HepG2 (cell line): ENCODE measurements at regions of chr7 and their contacts with region 1.

Region 1: GRCh38 chr7:100563809-100564400 is 9.8 kb downstream of the SAP25 start:
- DNase-seq: no peak
- ATAC-seq: peak; percentile 5; the same call in 1 of the 3 replicates
- H3K4me3 ChIP-seq: no peak overlapping the region
- H3K27ac ChIP-seq: peak overlapping the region; percentile 45
- H3K4me1 ChIP-seq: peaks cover 93% of the 10 kb centered on the region
- H3K27me3 ChIP-seq: no peaks in the 10 kb centered on the region
- CTCF ChIP-seq: peak; percentile 82
- EP300 ChIP-seq: no peak
- POLR2A ChIP-seq: no peak
- RAD21 ChIP-seq: peak; percentile 66

Region 2: DNA sequence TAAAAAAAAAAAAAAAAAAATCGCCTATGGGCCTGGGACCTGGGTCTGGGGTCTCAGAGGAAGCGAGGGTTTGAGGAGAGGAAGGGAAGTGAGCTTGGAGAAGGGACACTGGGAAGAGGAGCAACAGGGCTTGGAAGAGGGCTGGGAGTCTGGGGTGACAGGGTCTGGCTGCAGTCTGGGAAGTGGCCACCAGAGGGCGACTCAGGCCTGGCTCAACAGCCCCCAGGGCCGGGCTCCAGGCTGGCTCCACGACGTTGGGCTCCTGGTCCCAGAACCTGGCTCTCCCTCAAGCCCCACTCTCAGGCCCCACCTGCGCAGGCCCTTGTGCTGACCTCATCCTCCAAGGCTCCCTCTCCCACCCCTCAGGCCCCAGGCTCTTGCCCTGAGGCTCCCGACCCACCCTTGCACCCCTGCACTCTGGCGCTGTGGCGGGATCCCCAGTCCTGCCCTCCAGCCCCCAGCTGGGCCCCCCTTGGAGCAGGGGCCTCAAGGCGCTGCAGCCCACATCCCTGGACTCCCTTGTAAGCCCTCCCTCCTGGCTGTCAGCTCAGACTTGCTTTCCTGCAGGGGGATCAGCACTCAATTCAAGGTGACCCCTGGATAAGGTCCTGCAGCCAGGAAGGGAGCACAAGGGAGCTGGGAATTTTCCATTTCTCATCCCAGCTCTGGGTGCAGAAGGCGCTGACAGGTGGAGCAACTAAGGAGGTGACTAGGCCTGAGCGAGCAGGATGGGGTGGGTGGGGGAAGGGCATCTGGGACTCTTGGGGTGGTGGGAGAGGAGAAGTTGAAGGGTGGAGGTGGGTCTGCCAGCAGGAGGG is 94.5 kb before region 1 on chr7:
- CTCF ChIA-PET with region 1: interaction called, 16 read pairs
- POLR2A ChIA-PET with region 1: no interaction called
- in situ Hi-C with region 1: no loop called
- intact Hi-C with region 1: loop called (anchors 5 kb)
- DNase-seq: peak; percentile 51
- ATAC-seq: peak; percentile 87
- H3K4me3 ChIP-seq: 0 out of 6 replicates have a peak overlapping the region, but pooled peaks of 1 of the 3 experiments have one; percentile 28
- H3K27ac ChIP-seq: no peak overlapping the region
- H3K4me1 ChIP-seq: peaks cover 17% of the 10 kb centered on the region
- H3K27me3 ChIP-seq: no peaks in the 10 kb centered on the region
- CTCF ChIP-seq: peak; percentile 95
- EP300 ChIP-seq: no peak
- POLR2A ChIP-seq: no peak
- RAD21 ChIP-seq: peak; percentile 97

Region 3: DNA sequence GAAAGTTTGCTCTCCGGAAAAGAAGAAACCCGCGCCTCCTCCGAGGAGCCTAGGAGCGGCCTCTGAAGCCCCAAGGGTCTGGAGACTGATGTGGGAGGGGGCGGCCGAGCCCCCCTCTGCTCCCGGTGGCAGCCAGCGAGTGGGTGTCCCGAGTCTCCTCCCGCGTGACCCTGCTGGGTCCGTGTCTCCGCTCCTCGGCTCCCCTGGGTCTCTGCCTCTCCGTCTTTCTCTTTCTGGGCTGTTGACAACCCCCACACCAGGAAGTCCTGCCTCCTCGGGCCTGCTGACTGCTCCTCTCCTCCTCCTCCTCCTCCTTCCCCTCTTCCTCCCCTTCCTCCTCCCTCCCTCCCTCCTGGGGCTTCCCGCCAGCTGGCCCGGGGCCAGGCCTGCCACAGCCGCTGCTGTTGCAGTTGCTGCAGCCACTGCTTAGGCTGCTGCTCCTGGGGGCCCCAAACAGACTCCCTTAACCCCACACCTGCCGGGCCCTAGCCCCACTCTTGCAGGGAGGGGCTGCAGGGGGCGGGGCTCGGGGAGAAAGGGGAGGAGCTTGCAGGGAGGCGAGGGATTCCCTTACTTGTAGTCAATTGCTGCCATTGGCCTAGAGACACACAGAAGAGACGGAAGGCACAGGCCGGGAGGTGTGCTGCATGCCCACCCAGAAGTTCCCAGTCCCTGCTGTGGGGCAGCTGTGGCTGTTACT is 84.8 kb before region 1 on chr7 and contains the start of gene TSC22D4:
- CTCF ChIA-PET with region 1: interaction called, 10 read pairs
- POLR2A ChIA-PET with region 1: interaction called, 8 read pairs
- in situ Hi-C with region 1: no loop called
- intact Hi-C with region 1: no loop called
- DNase-seq: peak; percentile 73
- ATAC-seq: peak; percentile 60
- H3K4me3 ChIP-seq: peak within 1 kb of the TSS; percentile 72 to 96 (median 90)
- H3K27ac ChIP-seq: peak within 1 kb of the TSS; percentile 37
- H3K4me1 ChIP-seq: peaks cover 30% of the 10 kb centered on the region
- H3K27me3 ChIP-seq: peaks cover 0 to 13% of the 10 kb centered on the region in 2 experiments; a peak in 3 of 5 replicates
- CTCF ChIP-seq: no peak
- EP300 ChIP-seq: peak in 1 of 2 experiments; percentile 27; a peak in 1 of 4 replicates
- POLR2A ChIP-seq: peak; percentile 26 to 81; a peak in 3 of 4 replicates
- RAD21 ChIP-seq: no peak; the same call in 1 of the 2 replicates
- total RNA-seq, gene TSC22D4: 6.3 and 7.7 TPM in 2 replicates

Region 4: GRCh38 chr7:100489824-100490223 is 74.1 kb before region 1 on chr7:
- CTCF ChIA-PET with region 1: interaction called, 4 read pairs
- POLR2A ChIA-PET with region 1: interaction called, 3 read pairs
- in situ Hi-C with region 1: loop called (anchors 5 kb)
- intact Hi-C with region 1: loop called (anchors 2 kb)
- DNase-seq: peak; percentile 89
- ATAC-seq: peak; percentile 42
- H3K4me3 ChIP-seq: no peak overlapping the region
- H3K27ac ChIP-seq: no peak overlapping the region
- H3K4me1 ChIP-seq: peaks cover 60% of the 10 kb centered on the region
- H3K27me3 ChIP-seq: peaks cover 1 to 31% of the 10 kb centered on the region in 2 experiments
- CTCF ChIP-seq: no peak
- EP300 ChIP-seq: no peak
- POLR2A ChIP-seq: no peak
- RAD21 ChIP-seq: no peak

Region 5: DNA sequence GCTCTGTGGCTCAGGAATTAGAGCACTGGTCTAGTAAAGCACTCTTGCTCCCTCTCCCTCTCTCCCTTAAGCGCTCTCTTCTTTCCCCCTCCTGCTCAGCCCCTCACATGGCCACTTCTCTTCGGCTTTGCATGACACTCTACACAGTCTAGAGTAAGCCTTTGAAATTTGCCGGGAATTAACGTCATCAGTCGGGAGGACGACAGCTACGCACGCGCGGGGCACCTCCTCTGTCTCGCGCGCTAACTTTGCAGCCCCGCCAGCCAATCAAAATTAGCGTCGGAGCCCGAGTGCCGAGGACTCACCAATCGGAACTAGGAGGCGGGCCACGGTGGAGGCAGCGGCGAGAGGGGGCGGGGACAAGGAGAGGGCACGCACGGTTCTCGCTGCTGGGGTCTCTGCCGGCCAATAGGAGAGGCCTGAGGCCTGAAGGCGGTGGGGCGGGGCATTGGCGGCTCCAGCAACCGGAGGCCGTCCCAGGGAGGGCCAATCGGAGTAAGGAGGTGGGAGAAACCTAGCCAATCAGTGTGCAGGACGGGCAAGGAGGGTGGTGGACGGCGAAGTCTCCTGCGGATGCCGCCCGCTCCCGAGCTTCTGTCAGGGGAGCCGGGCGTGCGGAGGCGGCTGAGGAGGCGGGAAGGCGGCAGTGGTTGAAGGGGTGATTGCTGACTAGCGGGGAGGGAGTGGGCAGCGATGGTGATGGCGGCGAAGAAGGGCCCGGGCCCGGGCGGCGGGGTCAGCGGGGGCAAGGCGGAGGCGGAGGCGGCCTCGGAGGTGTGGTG is 25.1 kb before region 1 on chr7 and contains the start of gene AGFG2:
- CTCF ChIA-PET with region 1: no interaction called
- POLR2A ChIA-PET with region 1: interaction called, 12 read pairs
- in situ Hi-C with region 1: no loop called
- intact Hi-C with region 1: loop called (anchors 2 kb)
- DNase-seq: peak; percentile 99
- ATAC-seq: peak; percentile 94
- H3K4me3 ChIP-seq: peak within 1 kb of the TSS; percentile 93 to 98 (median 96)
- H3K27ac ChIP-seq: peak within 1 kb of the TSS; percentile 96
- H3K4me1 ChIP-seq: peaks cover 55% of the 10 kb centered on the region
- H3K27me3 ChIP-seq: no peaks in the 10 kb centered on the region; a peak in 1 of 5 replicates
- CTCF ChIP-seq: no peak
- EP300 ChIP-seq: no peak
- POLR2A ChIP-seq: peak in 1 of 2 experiments; percentile 93; a peak in 3 of 4 replicates
- RAD21 ChIP-seq: peak; percentile 28; the same call in 1 of the 2 replicates
- total RNA-seq, gene AGFG2: 117 and 132 TPM in 2 replicates